H1 (cell line): ENCODE measurements at regions of chr10 and their contacts with region 1.

Region 1: GRCh38 chr10:114403541-114404161 is 651 bp downstream of the AFAP1L2 start:
- DNase-seq: peak in 1 of 2 experiments; percentile 80
- H3K4me3 ChIP-seq: peak overlapping the region; percentile 59 to 75 (median 64)
- H3K27ac ChIP-seq: no peak overlapping the region
- H3K4me1 ChIP-seq: peaks cover 0 to 10% (median 2%) of the 10 kb centered on the region in 4 experiments; a peak in 4 of 7 replicates
- H3K27me3 ChIP-seq: peaks cover 9 to 30% (median 25%) of the 10 kb centered on the region in 4 experiments
- CTCF ChIP-seq: peak; percentile 34 to 47 (median 37)
- EP300 ChIP-seq: no peak
- POLR2A ChIP-seq: no peak
- RAD21 ChIP-seq: peak; percentile 27 to 44; a peak in 2 of 4 replicates

Region 2: GRCh38 chr10:114337505-114338462 is 65.9 kb before region 1 on chr10:
- CTCF ChIA-PET with region 1: interaction called, 10 read pairs
- POLR2A ChIA-PET with region 1: no interaction called
- DNase-seq: peak in 1 of 2 experiments; percentile 53
- H3K4me3 ChIP-seq: no peak overlapping the region
- H3K27ac ChIP-seq: no peak overlapping the region
- H3K4me1 ChIP-seq: peaks cover 6 to 11% (median 10%) of the 10 kb centered on the region in 4 experiments
- H3K27me3 ChIP-seq: no peaks in the 10 kb centered on the region
- CTCF ChIP-seq: no peak
- EP300 ChIP-seq: no peak; a peak in 1 of 3 replicates
- POLR2A ChIP-seq: no peak
- RAD21 ChIP-seq: no peak

Region 3: GRCh38 chr10:114427124-114427852 is 23.6 kb after region 1 on chr10:
- CTCF ChIA-PET with region 1: interaction called, 18 read pairs
- POLR2A ChIA-PET with region 1: interaction called, 4 read pairs
- DNase-seq: no peak
- H3K4me3 ChIP-seq: no peak overlapping the region
- H3K27ac ChIP-seq: no peak overlapping the region
- H3K4me1 ChIP-seq: peaks cover 0 to 5% (median 0%) of the 10 kb centered on the region in 4 experiments; a peak in 1 of 7 replicates
- H3K27me3 ChIP-seq: no peaks in the 10 kb centered on the region; a peak in 1 of 7 replicates
- CTCF ChIP-seq: no peak
- EP300 ChIP-seq: no peak
- POLR2A ChIP-seq: no peak
- RAD21 ChIP-seq: peak; percentile 39 to 40; a peak in 3 of 4 replicates

Region 4: DNA sequence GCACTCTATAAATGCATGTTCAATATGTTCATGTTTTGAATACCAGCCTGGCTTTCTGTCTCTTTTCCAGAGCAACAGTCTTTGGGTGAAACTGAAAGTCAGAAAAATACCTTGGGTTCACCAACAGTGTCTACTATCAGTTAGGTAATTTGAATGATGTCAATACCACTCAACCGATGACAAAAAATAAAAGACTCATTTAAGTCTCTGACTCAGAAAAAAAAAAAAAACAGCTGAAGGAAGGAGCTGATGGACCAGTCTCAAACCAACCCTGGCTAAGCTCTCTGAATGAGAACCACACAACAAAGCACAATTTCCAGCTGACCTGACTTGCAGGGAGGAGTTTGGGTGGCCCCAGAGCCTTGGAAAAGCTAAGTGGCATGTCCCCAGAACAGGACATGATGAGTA is 212.0 kb after region 1 on chr10:
- CTCF ChIA-PET with region 1: no interaction called
- POLR2A ChIA-PET with region 1: no interaction called
- DNase-seq: no peak
- H3K4me3 ChIP-seq: no peak overlapping the region
- H3K27ac ChIP-seq: no peak overlapping the region
- H3K4me1 ChIP-seq: no peaks in the 10 kb centered on the region
- H3K27me3 ChIP-seq: no peaks in the 10 kb centered on the region; a peak in 1 of 7 replicates
- CTCF ChIP-seq: no peak
- EP300 ChIP-seq: no peak
- POLR2A ChIP-seq: no peak
- RAD21 ChIP-seq: no peak